A673 (cell line): ENCODE measurements at regions of chr5 and their contacts with region 1.

Region 1: GRCh38 chr5:149551200-149552037 is at the start of gene CSNK1A1:
- DNase-seq: peak; percentile 99
- H3K4me3 ChIP-seq: peak within 1 kb of the TSS; percentile 91
- H3K27ac ChIP-seq: peak within 1 kb of the TSS; percentile 95
- H3K4me1 ChIP-seq: peaks cover 30% of the 10 kb centered on the region
- H3K27me3 ChIP-seq: no peaks in the 10 kb centered on the region
- CTCF ChIP-seq: peak; percentile 57
- total RNA-seq, gene CSNK1A1: 237 and 244 TPM in 2 replicates

Region 2: GRCh38 chr5:149540089-149540488 is 11.3 kb before region 1 on chr5:
- CTCF ChIA-PET with region 1: no interaction called
- POLR2A ChIA-PET with region 1: interaction called, 22 read pairs
- intact Hi-C with region 1: no loop called
- DNase-seq: no peak
- H3K4me3 ChIP-seq: no peak overlapping the region
- H3K27ac ChIP-seq: no peak overlapping the region
- H3K4me1 ChIP-seq: peaks cover 16% of the 10 kb centered on the region
- H3K27me3 ChIP-seq: no peaks in the 10 kb centered on the region
- CTCF ChIP-seq: no peak

Region 3: GRCh38 chr5:151115274-151115905 is 1564.0 kb after region 1 on chr5:
- CTCF ChIA-PET with region 1: no interaction called
- POLR2A ChIA-PET with region 1: no interaction called
- intact Hi-C with region 1: no loop called
- DNase-seq: peak; percentile 66
- H3K4me3 ChIP-seq: no peak overlapping the region
- H3K27ac ChIP-seq: no peak overlapping the region
- H3K4me1 ChIP-seq: no peaks in the 10 kb centered on the region
- H3K27me3 ChIP-seq: no peaks in the 10 kb centered on the region
- CTCF ChIP-seq: peak; percentile 94

Region 4: GRCh38 chr5:151328734-151329133 is 1777.3 kb after region 1 on chr5:
- CTCF ChIA-PET with region 1: no interaction called
- POLR2A ChIA-PET with region 1: no interaction called
- intact Hi-C with region 1: no loop called
- DNase-seq: no peak
- H3K4me3 ChIP-seq: no peak overlapping the region
- H3K27ac ChIP-seq: no peak overlapping the region
- H3K4me1 ChIP-seq: no peaks in the 10 kb centered on the region
- H3K27me3 ChIP-seq: peaks cover 10% of the 10 kb centered on the region
- CTCF ChIP-seq: no peak